Endothelial cell of umbilical vein (primary cell): ENCODE measurements at regions of chr9 and their contacts with region 1.

Region 1: GRCh38 chr9:75148561-75148960 is 60.2 kb downstream of the OSTF1 start:
- DNase-seq: peak; percentile 87
- H3K4me3 ChIP-seq: no peak overlapping the region
- H3K27ac ChIP-seq: peak overlapping the region; percentile 81
- H3K4me1 ChIP-seq: peaks cover 19% of the 10 kb centered on the region
- H3K27me3 ChIP-seq: no peaks in the 10 kb centered on the region
- CTCF ChIP-seq: no peak
- POLR2A ChIP-seq: no peak

Region 2: DNA sequence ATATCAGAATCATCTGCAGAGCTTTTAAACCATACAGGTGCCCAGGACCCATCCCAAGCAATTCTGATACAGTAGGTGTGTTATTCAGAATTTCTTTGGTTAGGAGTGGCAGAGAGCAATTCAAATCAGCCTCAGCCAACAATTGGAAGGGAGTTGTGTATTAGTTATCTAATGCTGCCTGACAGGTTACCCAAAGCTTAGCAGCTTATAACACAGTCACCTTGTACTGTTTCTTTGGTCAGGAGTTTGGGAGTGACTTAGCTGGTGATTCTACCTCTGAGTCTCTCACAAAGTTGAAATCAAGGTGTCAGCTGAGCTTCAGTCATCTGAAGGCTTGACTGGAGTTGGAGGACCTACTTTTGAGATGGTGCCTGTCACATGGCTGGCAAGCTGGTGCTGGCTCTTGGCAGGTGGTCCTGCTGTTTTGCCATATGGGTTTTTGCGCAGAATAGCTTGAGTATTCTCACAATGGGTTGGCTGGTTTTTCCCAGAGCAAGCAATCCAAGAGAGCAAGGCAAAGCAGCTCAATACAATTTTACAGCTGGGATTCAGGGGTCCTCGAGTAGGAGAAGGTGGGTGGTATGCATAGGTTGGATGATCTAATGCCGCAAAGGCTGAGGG is 101.7 kb before region 1 on chr9:
- CTCF ChIA-PET with region 1: no interaction called
- POLR2A ChIA-PET with region 1: no interaction called
- dilution Hi-C with region 1: no loop called
- intact Hi-C with region 1: no loop called
- DNase-seq: no peak
- H3K4me3 ChIP-seq: no peak overlapping the region
- H3K27ac ChIP-seq: no peak overlapping the region
- H3K4me1 ChIP-seq: no peaks in the 10 kb centered on the region
- H3K27me3 ChIP-seq: peaks cover 4 to 9% of the 10 kb centered on the region in 2 experiments
- CTCF ChIP-seq: no peak
- POLR2A ChIP-seq: no peak

Region 3: GRCh38 chr9:75108555-75108954 is 40.0 kb before region 1 on chr9:
- CTCF ChIA-PET with region 1: interaction called, 6 read pairs
- POLR2A ChIA-PET with region 1: no interaction called
- dilution Hi-C with region 1: no loop called
- intact Hi-C with region 1: loop called (anchors 2 kb)
- DNase-seq: peak; percentile 80
- H3K4me3 ChIP-seq: peak overlapping the region in 1 of 3 experiments; percentile 23
- H3K27ac ChIP-seq: peak overlapping the region; percentile 73
- H3K4me1 ChIP-seq: peaks cover 33% of the 10 kb centered on the region
- H3K27me3 ChIP-seq: no peaks in the 10 kb centered on the region
- CTCF ChIP-seq: no peak
- POLR2A ChIP-seq: peak; percentile 26

Region 4: DNA sequence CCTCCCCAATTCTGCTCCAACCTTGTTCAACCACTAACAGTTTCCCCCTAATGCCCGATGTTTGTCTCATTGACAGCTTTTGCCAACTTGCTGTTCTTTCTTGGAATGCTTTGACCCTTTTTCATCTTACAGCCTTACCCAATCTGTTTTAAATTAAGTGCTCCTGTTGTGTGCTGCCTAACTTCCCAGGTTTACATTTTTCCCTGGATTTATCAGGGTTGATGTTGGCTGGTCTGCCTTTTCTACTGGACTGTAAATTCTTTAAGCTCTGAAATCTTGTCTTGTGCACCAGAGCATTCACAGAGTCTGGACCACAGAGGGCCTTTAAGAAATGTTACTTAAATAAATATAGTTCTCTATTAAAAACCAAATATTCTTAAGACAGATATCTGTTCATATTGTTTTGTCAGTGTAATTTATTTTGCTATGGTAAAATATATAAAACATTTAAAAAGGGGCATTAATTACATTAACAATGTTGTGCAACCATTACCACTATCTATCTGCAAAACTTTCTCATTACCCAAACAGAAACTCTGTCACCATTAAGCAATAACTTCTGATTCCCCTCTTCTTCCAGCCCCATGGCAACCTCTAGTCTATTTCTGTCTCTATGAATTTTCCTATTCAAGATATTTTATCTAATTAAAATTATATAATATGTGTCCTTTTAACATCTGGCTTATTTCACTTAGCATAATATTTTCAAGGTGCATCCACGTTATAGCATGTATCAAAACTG is 12.7 kb after region 1 on chr9:
- CTCF ChIA-PET with region 1: interaction called, 8 read pairs
- POLR2A ChIA-PET with region 1: no interaction called
- dilution Hi-C with region 1: no loop called
- intact Hi-C with region 1: loop called (anchors 2 kb)
- DNase-seq: no peak
- H3K4me3 ChIP-seq: no peak overlapping the region
- H3K27ac ChIP-seq: no peak overlapping the region
- H3K4me1 ChIP-seq: no peaks in the 10 kb centered on the region
- H3K27me3 ChIP-seq: no peaks in the 10 kb centered on the region
- CTCF ChIP-seq: no peak
- POLR2A ChIP-seq: no peak

Region 5: GRCh38 chr9:75213765-75214164 is 65.2 kb after region 1 on chr9:
- CTCF ChIA-PET with region 1: no interaction called
- POLR2A ChIA-PET with region 1: no interaction called
- dilution Hi-C with region 1: no loop called
- intact Hi-C with region 1: no loop called
- DNase-seq: no peak
- H3K4me3 ChIP-seq: no peak overlapping the region
- H3K27ac ChIP-seq: no peak overlapping the region
- H3K4me1 ChIP-seq: no peaks in the 10 kb centered on the region
- H3K27me3 ChIP-seq: no peaks in the 10 kb centered on the region
- CTCF ChIP-seq: no peak
- POLR2A ChIP-seq: no peak